Psoas muscle (tissue), 8 donors: ENCODE measurements at regions of chr2 and their contacts with region 1.

Region 1: DNA sequence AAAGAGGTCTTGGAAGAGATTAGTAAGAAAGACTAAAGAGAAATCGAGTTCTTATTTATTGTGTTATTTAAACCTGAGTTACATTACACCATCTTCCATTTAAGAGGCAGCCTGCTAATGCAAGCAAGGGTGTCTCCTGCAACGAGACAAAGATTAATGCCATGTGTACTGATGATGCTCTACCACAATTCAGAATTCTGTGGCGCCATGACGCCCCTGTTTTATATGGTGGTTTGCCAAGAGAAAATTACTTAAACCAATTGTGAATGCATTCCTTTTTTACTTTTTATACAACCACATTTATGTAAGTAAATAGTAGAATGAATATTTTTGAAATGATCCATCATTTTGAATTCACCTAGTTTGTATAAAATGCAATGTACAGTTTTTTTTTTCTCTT is 356.1 kb upstream of the ZEB2 start:
- DNase-seq: no peak
- ATAC-seq: no peak
- H3K4me3 ChIP-seq: no peak overlapping the region
- H3K27ac ChIP-seq: no peak overlapping the region
- H3K4me1 ChIP-seq: no peaks in the 10 kb centered on the region
- H3K27me3 ChIP-seq: no peaks in the 10 kb centered on the region
- CTCF ChIP-seq: no peak

Region 2: DNA sequence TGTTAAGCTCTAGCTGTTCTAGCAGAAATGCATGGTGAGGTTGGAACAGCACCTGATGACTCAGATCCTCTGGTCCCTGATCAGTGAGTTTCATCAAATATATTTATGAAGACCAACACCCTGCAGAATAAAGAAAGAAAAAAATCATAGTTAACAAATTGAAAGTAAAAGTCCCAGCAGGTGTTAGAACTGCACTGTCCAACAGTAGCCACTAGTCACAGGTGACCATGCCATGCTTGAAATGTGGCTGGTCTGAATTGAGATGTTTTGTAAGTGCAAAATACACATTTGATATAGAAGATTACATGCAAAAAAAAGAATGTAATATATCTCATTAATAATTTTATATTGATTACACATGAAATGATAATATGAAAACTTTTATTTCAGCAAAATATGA is 654.6 kb after region 1 on chr2:
- intact Hi-C with region 1: loop called in 1 of 2 experiments (anchors 5 kb)
- DNase-seq: no peak
- ATAC-seq: no peak
- H3K4me3 ChIP-seq: no peak overlapping the region
- H3K27ac ChIP-seq: no peak overlapping the region
- H3K4me1 ChIP-seq: no peaks in the 10 kb centered on the region
- H3K27me3 ChIP-seq: no peaks in the 10 kb centered on the region
- CTCF ChIP-seq: no peak